ENCODE measurements at regions of chr20 and their contacts with region 1.

Region 1: GRCh38 chr20:46078954-46079353 is 10.8 kb downstream of the NCOA5 start:
- DNase-seq: no peak
- CTCF ChIP-seq: no peak

Region 2: GRCh38 chr20:46004889-46005473 is 74.0 kb before region 1 on chr20:
- CTCF ChIA-PET with region 1: no interaction called
- POLR2A ChIA-PET with region 1: no interaction called
- DNase-seq: no peak
- CTCF ChIP-seq: no peak

Region 3: DNA sequence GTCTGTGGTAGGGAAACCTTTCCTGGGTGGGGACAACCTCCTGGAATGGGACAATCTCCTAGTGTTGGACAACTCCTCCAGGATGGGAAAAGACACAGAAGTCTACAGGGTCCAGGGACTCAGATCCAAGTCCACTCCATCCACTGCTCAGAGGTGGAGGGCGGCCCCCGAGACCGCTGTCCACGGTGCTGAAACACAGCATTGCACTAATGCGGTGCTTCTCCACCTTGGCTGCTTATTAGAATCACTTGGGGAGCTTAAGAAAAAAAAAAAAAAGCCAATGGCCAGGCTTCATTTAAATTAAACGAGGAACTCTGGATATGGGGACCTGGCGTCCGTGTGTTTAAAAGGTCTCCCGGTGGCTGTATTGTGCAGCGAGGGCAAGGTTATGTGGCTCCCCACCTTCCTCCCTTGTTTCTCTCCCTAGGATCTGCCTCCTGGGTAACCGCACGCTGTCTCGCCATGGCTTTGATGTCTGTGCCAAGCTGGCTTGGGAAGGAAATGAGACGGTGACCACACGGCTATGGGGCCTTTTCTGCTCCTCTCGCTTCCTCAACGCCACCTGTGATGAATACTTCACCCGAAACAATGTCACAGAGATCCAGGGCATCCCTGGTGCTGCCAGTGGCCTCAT is 37.9 kb before region 1 on chr20:
- CTCF ChIA-PET with region 1: no interaction called
- POLR2A ChIA-PET with region 1: no interaction called
- DNase-seq: peak; percentile 57
- CTCF ChIP-seq: no peak

Region 4: DNA sequence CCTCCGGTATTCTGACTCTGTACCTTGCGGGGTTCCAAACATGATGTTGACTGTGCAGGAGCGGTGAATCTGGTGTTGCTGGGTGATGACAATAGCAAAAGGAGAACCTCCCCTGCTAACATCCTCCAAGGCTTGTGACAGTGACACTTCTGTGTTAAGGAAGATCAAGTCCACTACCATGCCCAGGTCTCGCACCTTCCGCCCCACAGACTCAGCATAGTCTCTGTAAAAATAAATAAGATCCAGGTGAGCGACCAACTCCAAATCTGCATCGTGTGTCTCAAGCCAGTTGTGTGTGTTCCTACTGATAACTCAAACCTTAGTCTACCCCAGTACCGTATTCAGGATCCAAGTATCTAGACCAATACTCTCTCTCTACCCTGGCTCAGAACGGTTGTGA is 13.9 kb before region 1 on chr20:
- CTCF ChIA-PET with region 1: interaction called, 13 read pairs
- POLR2A ChIA-PET with region 1: no interaction called
- DNase-seq: no peak
- CTCF ChIP-seq: no peak

Measured in GM10248 (cell line).